A673 (cell line): ENCODE measurements at regions of chr9 and their contacts with region 1.

Region 1: DNA sequence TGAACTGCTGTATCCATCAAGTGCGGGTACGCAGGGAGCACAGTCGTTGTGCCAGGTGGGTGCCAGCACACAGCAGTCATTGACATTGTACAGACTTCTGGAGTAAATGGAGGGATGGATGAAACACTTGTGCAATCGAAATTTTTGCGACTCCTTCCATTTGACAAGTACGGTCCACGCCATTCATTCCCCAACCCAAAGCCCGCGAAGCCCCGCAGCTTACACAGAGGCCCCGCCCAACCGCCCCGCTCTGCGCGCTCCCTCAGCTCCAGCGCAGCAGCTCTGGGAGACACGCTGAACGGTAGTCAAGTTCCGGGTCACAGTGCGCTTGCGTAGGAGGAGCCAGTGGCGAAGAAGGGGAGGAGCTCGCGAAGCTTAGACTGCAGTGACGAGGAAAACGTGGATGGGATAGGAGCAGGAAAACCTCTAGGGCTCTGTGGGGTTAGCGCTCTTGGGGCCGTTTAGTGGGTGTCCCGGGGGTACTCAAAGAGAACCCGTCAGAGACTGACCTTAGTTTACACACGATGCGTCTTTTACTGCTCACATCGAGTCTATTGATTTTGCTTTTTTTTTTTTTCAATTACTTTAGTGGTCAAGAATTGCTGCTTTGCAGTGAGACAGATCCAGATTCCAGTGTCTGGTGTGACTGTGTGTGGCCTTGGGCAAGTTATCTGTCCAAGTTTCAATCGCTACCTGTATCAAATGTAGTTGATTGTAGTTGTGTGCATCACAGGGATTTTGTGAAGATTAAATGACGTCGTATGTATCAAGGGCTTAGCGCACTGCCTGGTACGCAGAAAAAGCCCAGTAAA is 15.3 kb upstream of the MSANTD3 start:
- DNase-seq: peak; percentile 93
- H3K4me3 ChIP-seq: peak overlapping the region; percentile 32
- H3K27ac ChIP-seq: no peak overlapping the region
- H3K4me1 ChIP-seq: peaks cover 9% of the 10 kb centered on the region
- H3K27me3 ChIP-seq: no peaks in the 10 kb centered on the region
- CTCF ChIP-seq: no peak

Region 2: DNA sequence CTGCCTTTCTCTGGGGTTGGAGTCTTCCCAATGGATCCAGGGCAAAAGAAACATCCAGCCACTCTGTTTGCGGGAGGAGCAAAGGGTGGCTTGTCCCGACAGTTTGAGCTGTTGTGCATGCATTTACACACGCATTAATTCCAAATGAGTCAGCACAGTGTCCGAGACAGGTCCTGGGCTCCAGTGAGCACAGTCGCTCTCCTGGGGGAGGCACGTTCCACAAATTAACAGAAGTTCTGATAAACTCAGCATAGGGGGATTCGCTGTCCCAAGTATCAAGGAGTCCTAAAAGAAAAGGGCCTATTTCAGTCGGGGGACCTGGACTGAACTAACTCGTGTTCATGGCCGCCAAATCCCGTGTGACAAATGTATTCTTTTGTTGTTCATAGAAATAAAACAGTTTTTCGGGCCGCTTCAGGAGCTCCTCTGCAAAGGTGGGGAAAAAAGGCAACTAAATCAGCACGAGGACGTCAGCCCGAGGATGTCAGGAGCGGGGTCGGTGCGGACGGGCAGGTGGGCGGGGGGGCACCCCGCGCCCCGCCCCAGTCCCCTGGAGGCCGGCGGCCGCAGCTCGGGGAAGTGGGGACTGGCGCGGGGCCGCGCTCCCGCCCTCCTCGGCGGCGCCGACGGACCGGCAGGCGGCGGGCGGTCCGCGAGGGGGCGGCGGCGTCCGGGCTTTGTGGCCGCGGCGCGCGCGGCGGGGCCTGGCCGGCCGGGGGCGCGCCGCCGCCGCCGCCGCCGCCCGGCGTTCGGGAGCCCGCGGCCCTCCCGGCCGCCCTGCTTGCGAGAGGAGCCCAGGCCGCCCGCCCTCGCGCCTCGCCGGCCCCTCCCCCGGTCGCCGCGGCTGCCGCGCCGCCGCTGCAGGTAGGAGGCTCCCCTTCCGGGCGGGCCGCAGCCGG is 15.1 kb after region 1 on chr9 and contains the start of gene MSANTD3:
- CTCF ChIA-PET with region 1: interaction called, 11 read pairs
- POLR2A ChIA-PET with region 1: no interaction called
- intact Hi-C with region 1: no loop called
- DNase-seq: peak; percentile 67
- H3K4me3 ChIP-seq: peak within 1 kb of the TSS; percentile 80
- H3K27ac ChIP-seq: peak within 1 kb of the TSS; percentile 84
- H3K4me1 ChIP-seq: peaks cover 14% of the 10 kb centered on the region
- H3K27me3 ChIP-seq: no peaks in the 10 kb centered on the region
- CTCF ChIP-seq: no peak
- total RNA-seq, gene MSANTD3: 44.7 and 52.9 TPM in 2 replicates